CD8-positive, alpha-beta T cell (primary cell): ENCODE measurements at regions of chr16 and their contacts with region 1.

Region 1: GRCh38 chr16:30844671-30845449 is 49.0 kb downstream of the BCL7C start:
- DNase-seq: peak; percentile 49 to 92 (median 82)
- ATAC-seq: peak; percentile 93
- H3K4me3 ChIP-seq: no peak overlapping the region
- H3K4me3 Mint-ChIP-seq: peak overlapping the region; percentile 57
- H3K27ac ChIP-seq: no peak overlapping the region
- H3K27ac Mint-ChIP-seq: peak overlapping the region; percentile 84
- H3K4me1 ChIP-seq: peaks cover 6% of the 10 kb centered on the region
- H3K4me1 Mint-ChIP-seq: peaks cover 8% of the 10 kb centered on the region
- H3K27me3 ChIP-seq: no peaks in the 10 kb centered on the region
- H3K27me3 Mint-ChIP-seq: no peaks in the 10 kb centered on the region
- CTCF ChIP-seq: peak; percentile 80

Region 2: GRCh38 chr16:30700491-30700890 is 144.4 kb before region 1 on chr16:
- CTCF ChIA-PET with region 1: no interaction called
- POLR2A ChIA-PET with region 1: no interaction called
- intact Hi-C with region 1: no loop called
- DNase-seq: no peak
- ATAC-seq: no peak
- H3K4me3 ChIP-seq: no peak overlapping the region
- H3K4me3 Mint-ChIP-seq: no peak overlapping the region
- H3K27ac ChIP-seq: no peak overlapping the region
- H3K27ac Mint-ChIP-seq: no peak overlapping the region
- H3K4me1 ChIP-seq: peaks cover 18% of the 10 kb centered on the region
- H3K4me1 Mint-ChIP-seq: peaks cover 27% of the 10 kb centered on the region
- H3K27me3 ChIP-seq: no peaks in the 10 kb centered on the region
- H3K27me3 Mint-ChIP-seq: no peaks in the 10 kb centered on the region
- CTCF ChIP-seq: no peak

Region 3: DNA sequence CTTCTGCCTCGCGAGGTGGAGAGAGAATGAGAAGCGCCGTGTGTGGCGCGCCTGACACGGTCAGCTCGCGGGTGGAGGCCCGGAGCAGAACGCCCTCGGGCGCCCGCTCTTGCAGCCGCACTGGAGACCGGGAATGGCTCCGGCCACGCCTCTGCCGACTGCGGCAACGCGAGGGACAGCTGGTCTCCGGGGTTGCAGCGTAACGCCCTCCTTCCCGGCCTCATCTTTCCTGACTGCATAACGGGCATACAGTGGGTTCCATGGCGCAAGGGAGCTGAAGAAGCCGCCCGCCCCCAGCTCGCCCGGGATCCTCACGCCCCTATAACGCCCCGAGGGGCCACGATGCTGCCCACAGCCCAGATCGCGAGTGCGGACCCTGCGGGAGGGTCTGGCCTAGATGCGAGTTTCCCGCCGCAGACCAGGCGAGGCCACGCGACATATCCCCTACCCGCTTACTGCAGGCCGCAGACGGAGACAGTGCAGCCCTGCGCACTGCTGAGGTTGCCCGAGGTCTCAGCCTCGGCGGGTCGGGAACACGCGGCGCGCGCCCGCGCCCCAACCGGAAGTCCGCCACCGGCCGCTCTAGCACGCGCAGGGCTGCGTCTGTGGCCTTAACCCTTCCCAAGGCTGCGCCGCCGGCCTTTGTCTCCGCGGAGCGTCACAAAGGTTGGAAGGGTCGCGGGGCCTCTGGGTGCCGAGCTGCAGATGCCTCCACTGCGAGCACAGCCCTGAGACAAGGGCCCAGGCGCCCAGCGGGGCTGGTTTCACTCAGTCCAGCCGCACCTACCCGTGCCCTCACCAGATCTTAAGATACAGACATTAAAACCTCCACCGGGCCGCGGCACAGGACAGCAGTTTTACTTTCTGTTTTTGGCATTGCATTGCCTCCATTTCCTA is 30.2 kb after region 1 on chr16:
- CTCF ChIA-PET with region 1: interaction called, 8 read pairs
- POLR2A ChIA-PET with region 1: interaction called, 29 read pairs
- intact Hi-C with region 1: loop called (anchors 1 to 2 kb)
- DNase-seq: peak; percentile 78 to 95 (median 89)
- ATAC-seq: peak; percentile 78
- H3K4me3 ChIP-seq: peak overlapping the region; percentile 87 to 97
- H3K4me3 Mint-ChIP-seq: peak overlapping the region; percentile 90
- H3K27ac ChIP-seq: peak overlapping the region; percentile 84 to 94
- H3K27ac Mint-ChIP-seq: peak overlapping the region; percentile 96
- H3K4me1 ChIP-seq: peaks cover 24% of the 10 kb centered on the region
- H3K4me1 Mint-ChIP-seq: peaks cover 29% of the 10 kb centered on the region
- H3K27me3 ChIP-seq: no peaks in the 10 kb centered on the region
- H3K27me3 Mint-ChIP-seq: no peaks in the 10 kb centered on the region
- CTCF ChIP-seq: no peak

Region 4: DNA sequence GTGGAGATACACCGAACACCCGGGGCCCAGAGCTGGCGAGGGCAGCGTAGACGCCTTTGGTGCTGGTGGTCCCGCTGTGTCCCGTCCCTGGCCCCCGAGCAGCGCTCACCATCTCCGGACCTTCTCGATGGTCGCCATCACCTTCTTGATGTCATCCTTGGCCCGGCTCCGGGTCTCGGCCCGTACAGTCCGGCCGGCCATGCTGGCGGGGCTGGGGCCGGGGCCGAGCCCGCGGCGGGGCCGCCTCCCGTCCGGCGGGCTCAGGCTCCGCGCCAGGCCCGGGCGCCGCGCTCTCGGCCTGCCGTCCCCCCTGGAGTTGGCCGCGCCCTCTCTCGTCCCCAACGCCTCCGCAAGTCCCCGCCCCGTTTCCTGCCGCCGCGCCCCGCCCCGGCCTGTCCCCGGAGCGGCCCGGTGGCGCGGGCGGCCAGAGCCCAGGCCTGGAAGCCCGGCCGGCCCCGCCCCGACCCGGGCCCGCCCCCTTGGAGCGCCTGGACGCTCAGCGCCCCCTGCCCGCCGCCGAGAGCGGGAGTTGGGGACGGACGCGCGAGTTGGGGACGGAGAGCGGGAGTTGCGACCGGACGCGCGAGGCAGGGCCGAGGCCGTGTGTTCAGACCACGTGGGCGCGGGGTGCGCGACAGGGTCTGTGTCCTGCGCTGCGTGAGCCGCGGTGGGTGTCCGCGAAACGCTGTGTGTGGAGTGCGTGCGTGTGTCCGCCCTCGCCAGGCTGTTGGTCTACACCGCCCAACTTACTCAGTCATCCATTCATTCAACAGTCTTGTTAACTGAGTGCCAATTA is 49.1 kb after region 1 on chr16 and contains the start of gene BCL7C:
- CTCF ChIA-PET with region 1: interaction called, 96 read pairs
- POLR2A ChIA-PET with region 1: interaction called, 3 read pairs
- intact Hi-C with region 1: no loop called
- DNase-seq: peak; percentile 33 to 88 (median 78)
- ATAC-seq: peak; percentile 73
- H3K4me3 ChIP-seq: peak within 1 kb of the TSS; percentile 72 to 85
- H3K4me3 Mint-ChIP-seq: peak within 1 kb of the TSS; percentile 88
- H3K27ac ChIP-seq: peak within 1 kb of the TSS; percentile 45 to 83
- H3K27ac Mint-ChIP-seq: peak within 1 kb of the TSS; percentile 92
- H3K4me1 ChIP-seq: peaks cover 33% of the 10 kb centered on the region
- H3K4me1 Mint-ChIP-seq: peaks cover 43% of the 10 kb centered on the region
- H3K27me3 ChIP-seq: no peaks in the 10 kb centered on the region
- H3K27me3 Mint-ChIP-seq: no peaks in the 10 kb centered on the region
- CTCF ChIP-seq: no peak
- total RNA-seq, gene BCL7C: 16.0 to 16.2 TPM

Region 5: GRCh38 chr16:30902029-30902972 is 57.4 kb after region 1 on chr16:
- CTCF ChIA-PET with region 1: interaction called, 96 read pairs
- POLR2A ChIA-PET with region 1: interaction called, 20 read pairs
- intact Hi-C with region 1: loop called (anchors 1 kb)
- DNase-seq: peak in 8 of 9 experiments; percentile 42 to 82 (median 56)
- ATAC-seq: peak; percentile 81
- H3K4me3 ChIP-seq: peak overlapping the region; percentile 52 to 77
- H3K4me3 Mint-ChIP-seq: peak overlapping the region; percentile 95
- H3K27ac ChIP-seq: peak overlapping the region; percentile 74 to 75
- H3K27ac Mint-ChIP-seq: peak overlapping the region; percentile 97
- H3K4me1 ChIP-seq: peaks cover 33% of the 10 kb centered on the region
- H3K4me1 Mint-ChIP-seq: peaks cover 36% of the 10 kb centered on the region
- H3K27me3 ChIP-seq: no peaks in the 10 kb centered on the region
- H3K27me3 Mint-ChIP-seq: no peaks in the 10 kb centered on the region
- CTCF ChIP-seq: no peak

Region 6: DNA sequence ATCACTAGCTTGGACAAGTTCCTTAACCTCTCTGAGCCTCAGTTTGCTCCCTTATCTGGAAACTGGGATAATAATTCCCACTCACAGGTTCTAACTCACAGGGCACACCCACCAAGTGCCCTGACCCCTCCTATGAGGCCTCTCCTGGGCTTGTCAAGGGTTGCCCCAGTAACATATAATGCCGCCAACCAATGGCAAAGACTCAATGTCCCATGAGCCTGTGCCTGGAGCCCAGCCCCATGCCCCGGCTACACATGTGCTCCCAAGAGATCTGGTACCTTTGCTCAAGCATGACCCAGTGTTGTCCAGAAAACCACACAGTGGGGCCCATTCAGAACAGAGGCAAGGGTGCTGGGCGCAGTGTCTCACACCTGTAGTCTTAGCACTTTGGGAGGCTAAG is 70.0 kb after region 1 on chr16:
- CTCF ChIA-PET with region 1: interaction called, 67 read pairs
- POLR2A ChIA-PET with region 1: interaction called, 3 read pairs
- intact Hi-C with region 1: no loop called
- DNase-seq: no peak
- ATAC-seq: no peak
- H3K4me3 ChIP-seq: no peak overlapping the region
- H3K4me3 Mint-ChIP-seq: no peak overlapping the region
- H3K27ac ChIP-seq: no peak overlapping the region
- H3K27ac Mint-ChIP-seq: no peak overlapping the region
- H3K4me1 ChIP-seq: no peaks in the 10 kb centered on the region
- H3K4me1 Mint-ChIP-seq: no peaks in the 10 kb centered on the region
- H3K27me3 ChIP-seq: no peaks in the 10 kb centered on the region
- H3K27me3 Mint-ChIP-seq: no peaks in the 10 kb centered on the region
- CTCF ChIP-seq: no peak

Region 7: GRCh38 chr16:30941600-30942425 is 97.0 kb after region 1 on chr16:
- CTCF ChIA-PET with region 1: interaction called, 62 read pairs
- POLR2A ChIA-PET with region 1: interaction called, 4 read pairs
- intact Hi-C with region 1: loop called (anchors 1 kb)
- DNase-seq: peak; percentile 34 to 84 (median 62)
- ATAC-seq: peak; percentile 97
- H3K4me3 ChIP-seq: peak overlapping the region in 1 of 2 experiments; percentile 26
- H3K4me3 Mint-ChIP-seq: no peak overlapping the region
- H3K27ac ChIP-seq: peak overlapping the region in 1 of 2 experiments; percentile 9
- H3K27ac Mint-ChIP-seq: no peak overlapping the region
- H3K4me1 ChIP-seq: peaks cover 10% of the 10 kb centered on the region
- H3K4me1 Mint-ChIP-seq: peaks cover 12% of the 10 kb centered on the region
- H3K27me3 ChIP-seq: no peaks in the 10 kb centered on the region
- H3K27me3 Mint-ChIP-seq: no peaks in the 10 kb centered on the region
- CTCF ChIP-seq: peak; percentile 80

Region 8: DNA sequence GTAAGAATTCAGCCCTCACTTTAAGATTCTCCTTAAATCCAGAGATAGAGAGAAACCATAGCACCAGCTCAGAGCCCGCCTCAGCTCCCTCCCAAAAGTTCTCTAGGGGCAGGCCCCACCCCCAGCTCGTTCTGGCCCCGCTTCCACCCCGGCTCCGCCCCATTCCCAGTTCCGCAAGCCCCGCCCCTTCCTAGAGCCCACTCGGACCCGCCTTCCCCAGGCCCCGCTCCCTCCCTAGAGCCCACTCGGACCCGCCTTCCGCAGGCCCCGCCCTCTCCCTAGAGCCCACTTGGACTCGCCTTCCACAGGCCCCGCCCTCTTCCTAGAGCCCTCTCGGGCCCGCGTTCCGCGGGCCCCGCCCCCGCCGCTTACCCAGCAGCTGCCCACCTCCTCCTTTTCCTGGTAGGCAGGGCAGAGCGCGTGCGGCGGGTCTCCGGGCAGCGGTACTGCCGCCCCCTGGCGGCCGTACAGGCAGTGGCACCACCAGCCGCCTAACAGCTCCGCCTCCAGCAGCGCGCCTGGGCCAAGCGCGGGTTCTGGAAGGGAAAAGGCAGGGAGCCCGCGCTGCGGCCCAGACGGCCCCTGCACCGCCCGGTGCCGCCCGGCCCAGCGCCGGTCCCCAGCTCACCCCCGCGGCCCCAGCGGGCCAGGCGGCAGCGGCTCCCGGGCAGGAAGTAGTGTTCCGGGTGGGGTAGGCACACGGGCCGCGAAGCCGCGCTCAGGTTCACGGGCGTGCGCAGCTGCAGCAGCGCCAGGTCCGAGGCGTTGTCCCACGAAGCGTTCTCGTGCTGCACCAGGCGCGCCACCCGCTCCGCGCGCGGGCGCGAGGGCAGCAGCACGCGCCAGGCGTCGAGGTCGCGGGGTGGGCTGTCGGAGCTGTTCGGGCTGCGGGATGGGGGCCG is 297.5 kb after region 1 on chr16:
- CTCF ChIA-PET with region 1: no interaction called
- POLR2A ChIA-PET with region 1: no interaction called
- intact Hi-C with region 1: no loop called
- DNase-seq: peak; percentile 90 to 98 (median 95)
- ATAC-seq: peak; percentile 91
- H3K4me3 ChIP-seq: peak overlapping the region; percentile 35 to 66
- H3K4me3 Mint-ChIP-seq: peak overlapping the region; percentile 69
- H3K27ac ChIP-seq: peak overlapping the region; percentile 42 to 67
- H3K27ac Mint-ChIP-seq: peak overlapping the region; percentile 77
- H3K4me1 ChIP-seq: peaks cover 16% of the 10 kb centered on the region
- H3K4me1 Mint-ChIP-seq: peaks cover 14% of the 10 kb centered on the region
- H3K27me3 ChIP-seq: no peaks in the 10 kb centered on the region
- H3K27me3 Mint-ChIP-seq: no peaks in the 10 kb centered on the region
- CTCF ChIP-seq: peak; percentile 84